PC-3 (cell line): ENCODE measurements at regions of chr1 and their contacts with region 1.

Region 1: DNA sequence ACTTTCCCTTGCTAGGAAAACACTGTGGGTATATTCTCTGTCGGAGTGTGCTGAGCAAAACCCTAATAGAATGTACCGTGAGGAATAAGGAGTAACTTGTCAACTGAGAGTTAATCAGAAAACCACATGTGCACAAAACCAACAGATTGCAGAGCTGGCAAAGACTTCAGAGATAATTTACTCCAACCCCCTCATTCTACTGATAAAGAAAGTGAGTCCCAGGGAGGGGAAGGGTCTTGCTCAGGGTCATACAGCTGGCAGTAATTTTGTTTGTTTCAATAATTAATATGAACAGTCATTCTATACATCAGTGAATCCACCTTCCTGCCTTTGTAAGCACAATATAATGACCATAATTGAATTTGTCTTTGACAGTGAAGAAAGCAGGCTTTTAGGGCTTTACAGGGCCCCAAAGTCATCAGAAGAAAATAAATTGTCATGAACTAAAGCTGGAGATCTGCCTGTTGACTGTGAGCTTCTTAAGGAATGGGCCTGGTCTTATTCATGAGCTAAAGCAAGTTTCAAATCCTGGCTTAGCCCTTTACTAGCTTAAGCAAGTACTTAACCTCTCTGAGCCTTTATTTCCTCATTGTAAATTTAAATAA is 67.2 kb upstream of the HOOK1 start:
- DNase-seq: no peak
- ATAC-seq: no peak
- H3K4me3 ChIP-seq: no peak overlapping the region
- H3K27ac ChIP-seq: no peak overlapping the region
- H3K4me1 ChIP-seq: peaks cover 9% of the 10 kb centered on the region
- H3K27me3 ChIP-seq: no peaks in the 10 kb centered on the region
- CTCF ChIP-seq: no peak

Region 2: DNA sequence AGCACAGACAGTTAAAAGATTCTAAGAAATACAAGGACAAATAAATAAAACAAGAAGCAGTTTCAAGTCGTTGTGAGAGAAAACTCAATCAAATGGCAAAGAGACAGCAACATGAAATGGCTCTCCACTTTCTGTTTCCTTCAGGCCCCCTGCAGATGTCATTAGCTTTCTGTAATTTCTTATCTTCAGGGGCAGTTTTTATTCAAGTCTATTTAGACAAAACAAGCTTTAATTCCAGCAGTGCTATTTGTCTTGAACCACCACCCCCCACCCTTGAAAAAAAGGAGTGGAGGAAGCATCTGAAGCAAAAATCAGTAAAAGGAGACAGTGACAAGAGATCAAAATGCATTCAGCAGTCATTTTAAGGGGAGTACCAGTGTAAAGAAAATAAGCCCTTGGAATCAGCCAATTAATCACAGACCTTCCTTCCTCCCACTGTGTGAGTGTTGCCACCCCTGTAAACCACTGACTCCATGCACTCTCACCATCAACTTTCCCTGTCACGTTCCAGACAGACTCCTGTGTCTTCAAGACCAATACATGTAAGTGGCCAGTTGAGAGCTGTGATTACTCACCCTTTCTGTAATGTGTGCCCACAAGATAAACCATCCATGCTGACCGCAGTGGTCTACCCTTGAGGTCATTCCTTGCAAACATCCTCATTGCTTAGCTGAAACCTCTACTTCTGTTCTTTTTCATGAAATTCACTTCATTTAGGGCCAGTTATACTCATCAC is 68.9 kb before region 1 on chr1:
- CTCF ChIA-PET with region 1: no interaction called
- POLR2A ChIA-PET with region 1: no interaction called
- intact Hi-C with region 1: no loop called
- DNase-seq: peak; percentile 43
- ATAC-seq: no peak
- H3K4me3 ChIP-seq: no peak overlapping the region
- H3K27ac ChIP-seq: no peak overlapping the region
- H3K4me1 ChIP-seq: no peaks in the 10 kb centered on the region
- H3K27me3 ChIP-seq: no peaks in the 10 kb centered on the region
- CTCF ChIP-seq: no peak

Region 3: GRCh38 chr1:59856725-59857338 is 109.3 kb after region 1 on chr1:
- CTCF ChIA-PET with region 1: no interaction called
- POLR2A ChIA-PET with region 1: interaction called, 11 read pairs
- intact Hi-C with region 1: no loop called
- DNase-seq: peak; percentile 65
- ATAC-seq: peak; percentile 94
- H3K4me3 ChIP-seq: 0 out of 2 replicates have a peak overlapping the region, but pooled peaks have one; percentile 2
- H3K27ac ChIP-seq: peak overlapping the region; percentile 36
- H3K4me1 ChIP-seq: peaks cover 14% of the 10 kb centered on the region
- H3K27me3 ChIP-seq: no peaks in the 10 kb centered on the region
- CTCF ChIP-seq: no peak

Region 4: DNA sequence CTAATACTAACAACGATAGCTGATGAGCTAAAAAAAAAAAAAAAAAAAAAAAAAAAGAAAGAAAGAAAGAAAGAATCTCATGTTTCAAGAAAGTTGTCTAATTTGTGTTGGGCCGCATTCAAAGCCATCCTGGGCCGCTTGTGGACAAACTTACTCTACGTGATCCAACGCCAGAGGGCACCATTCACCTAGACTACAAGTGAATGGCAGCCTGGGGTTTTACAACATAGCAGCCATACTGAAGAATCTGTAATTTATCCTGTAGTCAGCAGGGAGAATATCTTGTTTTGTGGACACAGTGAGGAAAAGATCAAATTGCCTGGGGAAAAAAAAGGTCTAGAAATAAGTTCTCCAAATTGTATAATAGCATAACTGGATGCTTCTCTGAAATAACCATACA is 132.1 kb after region 1 on chr1:
- CTCF ChIA-PET with region 1: no interaction called
- POLR2A ChIA-PET with region 1: no interaction called
- intact Hi-C with region 1: no loop called
- DNase-seq: peak; percentile 69
- ATAC-seq: peak; percentile 85
- H3K4me3 ChIP-seq: no peak overlapping the region
- H3K27ac ChIP-seq: no peak overlapping the region
- H3K4me1 ChIP-seq: no peaks in the 10 kb centered on the region
- H3K27me3 ChIP-seq: 0 out of 2 replicates have a peak, but pooled peaks cover 4% of the 10 kb centered on the region
- CTCF ChIP-seq: peak; percentile 76